BJ (cell line): ENCODE measurements at regions of chr7 and their contacts with region 1.

Region 1: DNA sequence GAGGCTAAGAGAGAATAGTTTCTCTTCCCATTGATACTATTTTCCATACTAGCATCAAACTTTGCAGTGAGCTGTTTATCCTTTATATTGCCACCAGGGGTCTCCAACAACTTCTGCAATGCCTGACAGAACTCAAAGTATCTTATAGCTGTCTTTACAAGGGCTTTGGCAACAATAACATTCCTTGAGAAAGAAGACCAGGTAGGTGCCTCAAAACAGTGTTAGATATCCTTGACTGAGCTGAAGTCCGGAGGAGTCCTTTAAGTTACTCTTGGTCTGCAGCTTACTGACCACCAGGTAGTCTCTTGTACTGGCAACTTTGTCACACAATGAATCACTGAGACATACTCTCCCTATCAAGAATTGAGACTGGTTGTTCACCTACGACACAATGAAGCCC is 30.0 kb upstream of the TES start:
- DNase-seq: no peak
- H3K4me3 ChIP-seq: no peak overlapping the region
- H3K27me3 ChIP-seq: no peaks in the 10 kb centered on the region
- CTCF ChIP-seq: peak; percentile 78

Region 2: DNA sequence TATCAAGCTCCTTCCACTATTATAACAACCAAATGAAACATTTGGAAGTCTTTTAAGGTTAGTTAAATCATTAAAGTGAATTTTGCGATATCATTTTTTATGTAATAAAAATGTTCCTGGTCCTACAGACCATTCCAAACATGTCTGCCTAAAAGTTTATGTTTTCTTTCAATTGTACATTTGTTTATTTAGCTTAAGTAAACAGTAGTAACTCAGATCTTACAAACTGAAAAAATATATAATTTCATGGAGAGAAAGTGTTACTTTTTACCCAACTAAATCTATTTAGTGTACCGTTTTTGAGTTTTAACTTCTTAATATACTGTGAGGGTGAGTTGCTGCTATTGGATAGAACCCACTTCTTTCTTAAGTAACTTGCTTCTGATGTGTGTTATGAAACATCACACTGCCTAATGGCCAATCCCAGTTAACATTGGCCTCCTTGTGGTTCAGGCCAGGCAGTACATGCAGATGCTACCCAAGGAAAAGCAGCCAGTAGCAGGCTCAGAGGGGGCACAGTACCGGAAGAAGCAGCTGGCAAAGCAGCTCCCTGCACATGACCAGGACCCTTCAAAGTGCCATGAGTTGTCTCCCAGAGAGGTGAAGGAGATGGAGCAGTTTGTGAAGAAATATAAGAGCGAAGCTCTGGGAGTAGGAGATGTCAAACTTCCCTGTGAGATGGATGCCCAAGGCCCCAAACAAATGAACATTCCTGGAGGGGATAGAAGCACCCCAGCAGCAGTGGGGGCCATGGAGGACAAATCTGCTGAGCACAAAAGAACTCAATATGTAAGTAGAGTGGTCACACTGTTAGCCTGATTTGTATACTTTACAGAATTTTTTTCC is 69.6 kb after region 1 on chr7:
- CTCF ChIA-PET with region 1: interaction called, 10 read pairs
- POLR2A ChIA-PET with region 1: no interaction called
- DNase-seq: no peak
- H3K4me3 ChIP-seq: no peak overlapping the region
- H3K27me3 ChIP-seq: no peaks in the 10 kb centered on the region
- CTCF ChIP-seq: peak; percentile 67

Region 3: GRCh38 chr7:116953727-116954442 is 773.6 kb after region 1 on chr7:
- CTCF ChIA-PET with region 1: no interaction called
- POLR2A ChIA-PET with region 1: no interaction called
- DNase-seq: peak; percentile 51
- H3K4me3 ChIP-seq: peak overlapping the region; percentile 80
- H3K27me3 ChIP-seq: no peaks in the 10 kb centered on the region
- CTCF ChIP-seq: no peak